Activated naive CD8-positive, alpha-beta T cell treated with anti-CD3 and anti-CD28 coated beads, Interleukin-2, amount 10 ng/mL, durations not matched to agents 7 days and 5 days (primary cell): ENCODE measurements at regions of chr9 and their contacts with region 1.

Region 1: DNA sequence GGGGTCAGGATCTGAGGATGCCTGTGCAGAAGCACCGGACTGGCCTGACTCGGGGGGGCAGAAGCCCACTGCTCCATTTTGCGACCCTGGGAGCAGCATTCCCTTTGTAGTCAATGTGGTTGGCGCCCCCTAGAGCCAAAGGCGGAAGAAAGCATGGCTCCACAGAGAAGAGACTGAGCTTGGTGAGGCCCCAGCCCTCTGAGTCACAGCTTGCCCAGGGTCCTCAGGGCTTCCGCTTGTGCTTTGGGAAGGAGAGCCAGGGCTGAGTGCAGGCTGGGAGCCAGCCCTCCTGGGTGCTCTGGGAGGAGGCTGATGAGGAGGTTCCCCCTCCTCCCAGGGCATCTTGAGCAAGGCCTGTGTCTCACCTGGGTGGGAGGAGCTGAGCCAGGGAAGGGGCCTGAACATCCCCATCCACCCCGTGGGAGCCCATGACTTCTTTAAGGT is 5.5 kb upstream of the AQP3 start:
- DNase-seq: peak; percentile 62
- ATAC-seq: peak; percentile 75
- H3K4me3 Mint-ChIP-seq: peak overlapping the region; percentile 7
- H3K27ac Mint-ChIP-seq: peak overlapping the region; percentile 83
- H3K4me1 Mint-ChIP-seq: peaks cover 52% of the 10 kb centered on the region
- H3K27me3 Mint-ChIP-seq: no peaks in the 10 kb centered on the region

Region 2: DNA sequence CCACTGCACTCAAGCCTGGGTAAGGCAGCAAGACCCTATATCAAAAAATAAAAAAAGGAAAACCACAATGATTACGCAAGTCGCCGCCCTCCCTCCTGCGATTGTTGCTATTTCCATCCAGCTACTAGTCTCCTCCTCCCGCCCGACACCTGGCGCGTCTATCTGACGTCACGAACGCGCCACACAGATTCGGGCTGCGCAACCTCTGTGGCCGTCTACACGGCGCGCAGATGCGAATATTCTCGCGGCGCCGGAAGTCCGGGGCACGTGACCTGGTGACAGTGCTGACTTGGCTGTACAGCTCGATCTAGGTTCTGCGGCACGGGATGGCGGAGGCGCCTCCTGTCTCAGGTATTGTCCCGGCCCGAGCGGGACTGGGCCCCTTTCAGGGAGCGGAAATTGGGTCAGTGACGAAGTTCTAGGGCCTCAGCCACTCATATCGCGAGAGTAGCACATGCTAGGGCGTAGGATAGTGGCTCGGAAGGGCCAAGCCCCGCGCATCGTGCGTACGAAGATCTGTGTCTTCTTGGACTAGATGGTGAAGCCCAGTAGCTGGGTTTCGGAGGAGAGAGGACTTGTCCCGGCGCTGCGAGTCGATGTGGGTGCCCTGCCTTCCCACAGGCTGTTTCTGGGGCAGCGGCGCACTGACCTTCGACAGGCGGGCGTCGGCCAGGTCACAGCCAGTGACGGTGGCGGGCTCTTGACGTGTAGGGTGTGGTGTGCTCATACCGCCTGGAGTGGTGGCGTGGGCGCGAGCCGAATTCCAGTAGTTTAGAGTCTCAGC is 162.4 kb before region 1 on chr9 and contains the start of gene NFX1:
- POLR2A ChIA-PET with region 1: interaction called, 10 read pairs
- DNase-seq: peak; percentile 97
- ATAC-seq: peak; percentile 89
- H3K4me3 Mint-ChIP-seq: peak within 1 kb of the TSS; percentile 93
- H3K27ac Mint-ChIP-seq: peak within 1 kb of the TSS; percentile 98
- H3K4me1 Mint-ChIP-seq: peaks cover 45% of the 10 kb centered on the region
- H3K27me3 Mint-ChIP-seq: no peaks in the 10 kb centered on the region
- total RNA-seq, gene NFX1: 47.4 to 48.2 TPM

Region 3: GRCh38 chr9:33430942-33431341 is 21.9 kb before region 1 on chr9:
- POLR2A ChIA-PET with region 1: no interaction called
- DNase-seq: no peak
- ATAC-seq: no peak
- H3K4me3 Mint-ChIP-seq: no peak overlapping the region
- H3K27ac Mint-ChIP-seq: no peak overlapping the region
- H3K4me1 Mint-ChIP-seq: peaks cover 3% of the 10 kb centered on the region
- H3K27me3 Mint-ChIP-seq: no peaks in the 10 kb centered on the region